Activated CD4-positive, alpha-beta T cell treated with anti-CD3 and anti-CD28 coated beads, Interleukin-2, amount 10 ng/mL, durations not matched to agents 7 days and 5 days (primary cell): ENCODE measurements at regions of chr3 and their contacts with region 1.

Region 1: DNA sequence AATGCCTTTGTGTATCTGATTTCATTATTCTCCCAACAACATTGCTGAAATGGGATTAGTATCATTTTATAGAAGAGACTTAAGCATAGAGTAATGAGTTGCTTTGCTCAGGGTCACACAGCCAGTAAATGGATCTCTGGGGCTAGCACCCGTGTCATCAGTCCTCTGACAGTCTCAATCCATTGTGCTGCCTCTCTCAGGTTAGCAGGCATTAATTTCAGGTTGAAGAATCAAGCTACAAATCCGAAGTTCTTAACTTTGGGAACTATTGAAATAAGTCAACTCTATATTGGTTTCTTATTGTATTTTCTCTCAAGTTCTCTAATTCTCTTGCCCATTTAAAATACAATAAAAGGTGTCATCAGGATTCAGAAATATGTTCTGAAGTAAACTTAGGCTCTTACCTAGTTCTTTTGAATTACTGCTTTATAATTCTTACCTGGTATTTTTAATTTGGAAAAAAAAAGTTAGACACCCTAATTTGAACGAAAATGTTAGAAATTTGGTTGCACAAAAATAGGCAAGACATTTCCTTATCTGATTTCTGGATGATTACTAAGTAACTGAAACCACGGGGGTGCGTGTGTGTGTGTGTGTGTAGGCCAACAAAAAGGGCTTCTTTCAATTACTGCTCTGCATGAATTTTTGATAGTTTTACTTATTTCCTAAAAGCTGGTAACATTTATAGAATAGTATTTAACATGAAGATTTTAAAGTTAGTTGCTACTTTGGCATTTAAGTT is 189.8 kb downstream of the MBNL1 start:
- DNase-seq: no peak
- H3K4me3 Mint-ChIP-seq: no peak overlapping the region
- H3K27ac Mint-ChIP-seq: peak overlapping the region; percentile 44
- H3K4me1 Mint-ChIP-seq: peaks cover 30% of the 10 kb centered on the region
- H3K27me3 Mint-ChIP-seq: no peaks in the 10 kb centered on the region

Region 2: GRCh38 chr3:152128356-152128755 is 330.2 kb before region 1 on chr3:
- CTCF ChIA-PET with region 1: no interaction called
- POLR2A ChIA-PET with region 1: no interaction called
- DNase-seq: no peak
- H3K4me3 Mint-ChIP-seq: no peak overlapping the region
- H3K27ac Mint-ChIP-seq: no peak overlapping the region
- H3K4me1 Mint-ChIP-seq: peaks cover 9% of the 10 kb centered on the region
- H3K27me3 Mint-ChIP-seq: peaks cover 16% of the 10 kb centered on the region

Region 3: DNA sequence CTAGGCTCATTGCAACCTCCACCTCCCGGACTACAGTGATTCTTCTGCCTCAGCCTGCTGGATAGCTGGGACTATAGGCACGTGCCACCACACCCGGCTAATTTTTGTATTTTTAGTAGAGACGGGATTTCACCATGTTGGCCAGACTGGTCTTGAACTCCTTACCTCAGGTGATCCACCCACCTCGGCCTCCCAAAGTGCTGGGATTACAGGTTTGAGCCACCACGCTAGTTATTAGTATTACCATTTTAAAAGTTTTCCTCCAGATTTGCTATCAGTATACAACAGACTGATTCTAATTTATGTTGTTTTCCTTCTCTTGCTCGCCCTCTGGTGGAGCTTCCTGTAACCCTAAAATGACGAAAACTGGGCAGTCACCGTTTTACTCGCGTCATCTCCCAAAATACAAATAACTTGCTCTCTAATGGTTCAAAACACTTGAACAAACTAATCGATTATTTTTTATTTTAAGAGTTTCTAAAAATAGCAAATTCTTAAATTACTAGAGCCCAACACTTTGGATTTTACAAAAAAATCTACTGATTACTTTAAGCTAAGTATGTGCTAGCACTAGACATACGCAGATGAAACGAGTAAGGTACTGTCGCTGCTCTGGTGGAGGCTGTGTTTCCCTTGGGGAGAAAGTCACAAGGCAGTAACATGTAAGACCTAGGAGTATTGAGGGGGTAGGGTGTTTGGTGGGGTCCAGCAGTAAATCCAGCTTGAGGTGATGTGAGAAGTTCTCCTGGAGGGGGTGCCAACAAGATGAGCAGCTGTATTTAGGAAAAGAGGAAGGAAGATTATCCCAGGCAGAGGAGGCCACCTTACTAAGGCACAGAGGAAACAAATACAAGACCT is 13.5 kb after region 1 on chr3:
- CTCF ChIA-PET with region 1: interaction called, 10 read pairs
- POLR2A ChIA-PET with region 1: no interaction called
- DNase-seq: peak; percentile 76
- H3K4me3 Mint-ChIP-seq: peak overlapping the region; percentile 1
- H3K27ac Mint-ChIP-seq: no peak overlapping the region
- H3K4me1 Mint-ChIP-seq: peaks cover 13% of the 10 kb centered on the region
- H3K27me3 Mint-ChIP-seq: peaks cover 5% of the 10 kb centered on the region